Heart right ventricle (tissue), 16 donors: ENCODE measurements at regions of chr1 and their contacts with region 1.

Region 1: GRCh38 chr1:12549460-12550349 is 68.3 kb downstream of the DHRS3 start:
- DNase-seq: peak; percentile 62
- ATAC-seq: peak in 7 of 8 donors; percentile 9 to 49 (median 30)
- H3K4me3 ChIP-seq: no peak overlapping the region
- H3K27ac ChIP-seq: peak overlapping the region in 9 of 10 donors; percentile 58 to 82 (median 69)
- H3K4me1 ChIP-seq: peaks cover 25 to 78% (median 58%) of the 10 kb centered on the region in 9 donors
- H3K27me3 ChIP-seq: no peaks in the 10 kb centered on the region
- CTCF ChIP-seq: no peak

Region 2: DNA sequence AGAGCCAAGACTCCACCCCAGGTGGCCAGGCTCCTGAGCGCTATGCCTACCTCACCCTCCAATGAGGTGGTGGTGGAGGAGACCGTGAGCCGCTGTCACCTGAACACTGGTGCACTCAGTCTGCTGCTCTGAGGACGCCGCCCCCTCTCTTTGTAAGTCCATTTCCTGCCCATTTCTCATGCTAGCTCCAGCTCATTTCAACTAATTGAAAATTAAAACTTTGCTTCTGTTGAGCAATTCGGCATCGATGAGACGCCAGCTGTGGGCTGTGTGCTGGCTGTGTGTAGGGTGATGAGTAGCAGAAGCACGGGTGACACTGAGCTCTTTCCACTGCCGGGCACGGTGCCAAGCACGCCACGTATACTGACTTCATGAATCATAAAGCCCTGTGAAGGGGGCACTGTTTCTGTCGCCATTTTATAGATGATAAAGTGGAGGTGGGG is 371.7 kb before region 1 on chr1:
- intact Hi-C with region 1: no loop called
- DNase-seq: peak in 1 of 2 donors; percentile 79
- ATAC-seq: peak in 3 of 8 donors; percentile 15 to 43 (median 34)
- H3K4me3 ChIP-seq: peak overlapping the region in 2 of 10 donors; percentile 9 to 24
- H3K27ac ChIP-seq: peak overlapping the region in 9 of 10 donors; percentile 48 to 99 (median 78)
- H3K4me1 ChIP-seq: peaks cover 17 to 100% (median 93%) of the 10 kb centered on the region in 9 donors
- H3K27me3 ChIP-seq: peaks cover 0 to 5% (median 0%) of the 10 kb centered on the region in 7 donors
- CTCF ChIP-seq: no peak

Region 3: GRCh38 chr1:12501661-12502060 is 48.0 kb before region 1 on chr1:
- intact Hi-C with region 1: loop called in 1 of 10 experiments (anchors 5 kb)
- DNase-seq: no peak
- ATAC-seq: peak in 2 of 8 donors; percentile 34 to 50
- H3K4me3 ChIP-seq: no peak overlapping the region
- H3K27ac ChIP-seq: peak overlapping the region in 1 of 10 donors; percentile 6
- H3K4me1 ChIP-seq: peaks cover 0 to 22% (median 13%) of the 10 kb centered on the region in 9 donors
- H3K27me3 ChIP-seq: no peaks in the 10 kb centered on the region
- CTCF ChIP-seq: no peak